ENCODE measurements at regions of chrX and their contacts with region 1.

Region 1: GRCh38 chrX:138775517-138775916 is 64.0 kb upstream of the FGF13 start:
- DNase-seq: peak in 1 of 9 donors; percentile 0
- ATAC-seq: no peak
- H3K4me3 ChIP-seq: no peak overlapping the region
- H3K4me3 Mint-ChIP-seq: no peak overlapping the region
- H3K27ac ChIP-seq: no peak overlapping the region
- H3K27ac Mint-ChIP-seq: no peak overlapping the region
- H3K4me1 ChIP-seq: no peaks in the 10 kb centered on the region
- H3K4me1 Mint-ChIP-seq: no peaks in the 10 kb centered on the region
- H3K27me3 ChIP-seq: no peaks in the 10 kb centered on the region
- H3K27me3 Mint-ChIP-seq: no peaks in the 10 kb centered on the region

Region 2: DNA sequence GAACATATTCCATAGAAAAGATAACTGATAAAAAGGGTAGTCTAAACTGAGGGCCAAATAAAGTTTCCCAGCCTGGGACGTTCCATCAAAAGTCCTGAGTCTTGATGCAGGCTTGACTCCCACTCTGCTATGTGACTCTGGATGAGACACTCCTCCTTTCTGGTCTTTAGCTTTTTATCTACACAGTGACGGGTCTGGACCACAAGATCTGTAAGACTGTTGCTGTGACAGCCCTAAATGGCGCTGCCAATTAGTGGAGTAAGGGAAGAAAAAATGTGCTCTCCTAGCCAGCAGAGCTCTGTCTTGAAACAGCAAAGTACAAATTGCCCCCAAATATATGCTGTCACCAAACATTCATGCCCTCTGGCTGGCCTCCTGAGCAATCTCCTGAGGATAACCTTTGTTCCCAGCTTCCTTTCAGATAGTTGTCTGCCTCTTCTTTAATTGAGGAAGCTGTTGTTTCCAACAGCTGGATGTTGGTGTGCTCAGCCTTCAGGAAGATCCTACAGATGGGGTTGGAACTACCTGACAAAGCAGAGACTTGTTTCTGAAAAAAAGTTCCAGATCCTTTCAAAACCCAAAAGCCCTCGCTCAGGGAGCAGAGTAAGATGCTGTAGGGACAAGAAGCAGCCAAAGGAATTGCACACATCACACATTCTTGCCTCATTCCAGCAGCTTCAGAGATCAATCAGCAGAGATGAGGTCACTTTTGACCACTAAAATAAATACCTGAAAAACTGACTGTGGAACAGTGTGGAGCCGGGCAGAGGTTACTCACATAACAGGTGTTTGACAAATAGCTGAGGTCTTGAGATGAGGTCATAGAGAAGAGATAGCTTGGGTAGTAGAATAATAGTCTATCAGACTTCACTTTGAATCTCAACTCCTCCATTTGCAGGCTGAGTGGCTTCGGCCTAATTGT is 319.4 kb after region 1 on chrX:
- CTCF ChIA-PET with region 1: no interaction called
- POLR2A ChIA-PET with region 1: no interaction called
- intact Hi-C with region 1: no loop called
- DNase-seq: peak in 1 of 9 donors; percentile 0
- ATAC-seq: no peak
- H3K4me3 ChIP-seq: no peak overlapping the region
- H3K4me3 Mint-ChIP-seq: no peak overlapping the region
- H3K27ac ChIP-seq: no peak overlapping the region
- H3K27ac Mint-ChIP-seq: no peak overlapping the region
- H3K4me1 ChIP-seq: no peaks in the 10 kb centered on the region
- H3K4me1 Mint-ChIP-seq: no peaks in the 10 kb centered on the region
- H3K27me3 ChIP-seq: no peaks in the 10 kb centered on the region
- H3K27me3 Mint-ChIP-seq: no peaks in the 10 kb centered on the region

Region 3: DNA sequence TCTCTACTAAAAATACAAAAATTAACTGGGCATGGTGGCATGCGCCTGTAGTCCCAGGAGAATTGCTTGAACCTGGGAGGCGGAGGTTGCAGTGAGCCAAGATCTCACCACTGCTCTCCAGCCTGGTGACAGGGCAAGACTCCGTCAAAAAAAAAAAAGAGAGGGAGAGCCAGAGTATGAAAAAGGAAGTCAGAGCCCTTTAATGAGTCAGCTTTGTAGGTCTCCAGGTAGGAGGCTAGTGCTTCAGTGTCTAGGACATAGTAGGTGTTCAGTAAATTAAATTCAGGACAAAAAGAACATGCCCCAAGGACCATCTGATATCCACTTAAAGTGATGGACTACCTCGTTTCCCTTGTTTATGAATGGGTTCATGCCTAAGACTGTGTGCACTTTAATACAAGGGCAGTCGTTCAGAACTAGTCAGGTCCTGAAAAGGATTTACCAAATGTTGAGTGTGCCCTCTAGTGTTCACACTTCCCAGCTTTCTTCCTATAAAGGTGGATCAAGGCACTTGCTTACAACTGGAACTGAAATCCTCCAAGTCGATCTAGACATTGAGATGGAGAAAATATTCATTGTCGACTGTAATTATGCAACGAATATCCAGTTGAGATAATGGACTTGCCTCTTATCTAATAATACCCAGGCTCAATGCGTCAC is 784.0 kb after region 1 on chrX:
- CTCF ChIA-PET with region 1: no interaction called
- POLR2A ChIA-PET with region 1: no interaction called
- intact Hi-C with region 1: loop called in 1 of 2 experiments (anchors 5 kb)
- DNase-seq: peak in 2 of 9 donors; percentile 7 to 11
- ATAC-seq: no peak
- H3K4me3 ChIP-seq: no peak overlapping the region
- H3K4me3 Mint-ChIP-seq: no peak overlapping the region
- H3K27ac ChIP-seq: no peak overlapping the region
- H3K27ac Mint-ChIP-seq: no peak overlapping the region
- H3K4me1 ChIP-seq: no peaks in the 10 kb centered on the region
- H3K4me1 Mint-ChIP-seq: peaks cover 0 to 3% (median 0%) of the 10 kb centered on the region in 7 donors
- H3K27me3 ChIP-seq: no peaks in the 10 kb centered on the region
- H3K27me3 Mint-ChIP-seq: peaks cover 0 to 8% (median 4%) of the 10 kb centered on the region in 5 donors

Region 4: DNA sequence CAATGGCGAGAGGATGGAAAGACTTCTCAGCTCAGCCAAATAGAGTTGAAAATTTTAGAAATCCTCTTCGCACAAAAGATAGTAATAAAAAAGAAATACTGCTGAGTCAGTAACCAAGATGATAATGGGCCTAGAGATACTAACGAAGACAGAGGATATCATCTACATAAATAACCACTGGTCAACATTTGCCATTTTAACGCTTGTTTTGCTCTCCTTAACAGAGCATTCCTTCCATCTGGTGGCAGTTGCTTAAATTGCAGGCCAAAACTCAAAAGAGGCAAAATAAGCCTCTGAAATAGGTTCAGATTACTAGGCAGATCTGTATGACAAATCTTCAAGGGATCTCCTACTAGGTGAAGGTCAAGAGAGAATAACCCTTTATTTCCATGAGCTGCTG is 984.1 kb after region 1 on chrX:
- CTCF ChIA-PET with region 1: no interaction called
- POLR2A ChIA-PET with region 1: no interaction called
- intact Hi-C with region 1: loop called in 1 of 2 experiments (anchors 5 kb)
- DNase-seq: no peak
- ATAC-seq: no peak
- H3K4me3 ChIP-seq: no peak overlapping the region
- H3K4me3 Mint-ChIP-seq: no peak overlapping the region
- H3K27ac ChIP-seq: no peak overlapping the region
- H3K27ac Mint-ChIP-seq: no peak overlapping the region
- H3K4me1 ChIP-seq: no peaks in the 10 kb centered on the region
- H3K4me1 Mint-ChIP-seq: no peaks in the 10 kb centered on the region
- H3K27me3 ChIP-seq: no peaks in the 10 kb centered on the region
- H3K27me3 Mint-ChIP-seq: no peaks in the 10 kb centered on the region

Region 5: DNA sequence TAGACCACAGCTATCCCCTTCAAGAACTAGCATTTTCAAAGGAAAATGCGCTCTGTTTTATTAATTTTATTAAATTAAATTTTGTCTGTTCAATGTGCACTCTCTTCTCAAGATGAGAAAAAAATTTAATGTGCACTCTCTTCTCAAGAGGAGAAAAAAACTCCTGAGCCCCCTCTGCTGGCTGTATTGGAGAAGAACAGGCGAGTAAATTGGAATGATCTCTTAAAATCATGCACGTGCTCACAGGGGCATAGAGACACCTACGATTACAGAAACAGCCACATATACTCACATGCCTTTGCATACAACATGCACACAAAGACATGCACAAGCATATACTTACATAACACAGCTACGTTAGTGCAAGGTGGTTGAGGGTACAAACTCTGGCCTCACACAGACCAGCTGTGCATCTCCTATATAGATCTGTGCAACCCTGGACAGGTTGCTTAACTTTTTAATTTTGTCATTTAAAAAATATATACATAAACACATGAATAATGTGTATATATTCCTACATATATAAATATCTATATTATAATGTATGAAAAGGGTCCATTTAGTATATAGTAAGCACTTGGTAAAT is 1366.0 kb after region 1 on chrX:
- CTCF ChIA-PET with region 1: no interaction called
- POLR2A ChIA-PET with region 1: no interaction called
- intact Hi-C with region 1: loop called in 1 of 2 experiments (anchors 2 kb)
- DNase-seq: peak in 6 of 9 donors; percentile 1 to 38 (median 18)
- ATAC-seq: no peak
- H3K4me3 ChIP-seq: no peak overlapping the region
- H3K4me3 Mint-ChIP-seq: no peak overlapping the region
- H3K27ac ChIP-seq: no peak overlapping the region
- H3K27ac Mint-ChIP-seq: no peak overlapping the region
- H3K4me1 ChIP-seq: no peaks in the 10 kb centered on the region
- H3K4me1 Mint-ChIP-seq: no peaks in the 10 kb centered on the region
- H3K27me3 ChIP-seq: no peaks in the 10 kb centered on the region
- H3K27me3 Mint-ChIP-seq: no peaks in the 10 kb centered on the region

Measured in naive thymus-derived CD4-positive, alpha-beta T cell (primary cell).